WTC11 (cell line): ENCODE measurements at regions of chr9 and their contacts with region 1.

Region 1: GRCh38 chr9:69190086-69190862 is 16.2 kb downstream of the TJP2 start:
- DNase-seq: no peak
- ATAC-seq: no peak
- H3K4me3 Mint-ChIP-seq: no peak overlapping the region
- H3K27ac Mint-ChIP-seq: 0 out of 2 replicates have a peak overlapping the region, but pooled peaks have one; percentile 34
- H3K4me1 Mint-ChIP-seq: peaks cover 58% of the 10 kb centered on the region
- H3K27me3 Mint-ChIP-seq: no peaks in the 10 kb centered on the region
- CTCF ChIP-seq: no peak

Region 2: DNA sequence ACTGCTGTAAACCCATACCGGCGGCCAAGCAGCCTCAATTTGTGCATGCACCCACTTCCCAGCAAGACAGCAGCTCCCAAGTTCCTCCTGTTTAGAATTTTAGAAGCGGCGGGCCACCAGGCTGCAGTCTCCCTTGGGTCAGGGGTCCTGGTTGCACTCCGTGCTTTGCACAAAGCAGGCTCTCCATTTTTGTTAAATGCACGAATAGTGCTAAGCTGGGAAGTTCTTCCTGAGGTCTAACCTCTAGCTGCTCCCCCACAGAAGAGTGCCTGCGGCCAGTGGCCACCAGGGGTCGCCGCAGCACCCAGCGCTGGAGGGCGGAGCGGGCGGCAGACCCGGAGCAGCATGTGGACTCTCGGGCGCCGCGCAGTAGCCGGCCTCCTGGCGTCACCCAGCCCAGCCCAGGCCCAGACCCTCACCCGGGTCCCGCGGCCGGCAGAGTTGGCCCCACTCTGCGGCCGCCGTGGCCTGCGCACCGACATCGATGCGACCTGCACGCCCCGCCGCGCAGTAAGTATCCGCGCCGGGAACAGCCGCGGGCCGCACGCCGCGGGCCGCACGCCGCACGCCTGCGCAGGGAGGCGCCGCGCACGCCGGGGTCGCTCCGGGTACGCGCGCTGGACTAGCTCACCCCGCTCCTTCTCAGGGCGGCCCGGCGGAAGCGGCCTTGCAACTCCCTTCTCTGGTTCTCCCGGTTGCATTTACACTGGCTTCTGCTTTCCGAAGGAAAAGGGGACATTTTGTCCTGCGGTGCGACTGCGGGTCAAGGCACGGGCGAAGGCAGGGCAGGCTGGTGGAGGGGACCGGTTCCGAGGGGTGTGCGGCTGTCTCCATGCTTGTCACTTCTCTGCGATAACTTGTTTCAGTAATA is 154.6 kb before region 1 on chr9 and contains the start of gene FXN:
- CTCF ChIA-PET with region 1: interaction called, 14 read pairs
- POLR2A ChIA-PET with region 1: no interaction called
- DNase-seq: peak; percentile 80
- ATAC-seq: peak; percentile 91
- H3K4me3 Mint-ChIP-seq: peak within 1 kb of the TSS; percentile 94
- H3K27ac Mint-ChIP-seq: peak within 1 kb of the TSS; percentile 83
- H3K4me1 Mint-ChIP-seq: peaks cover 11% of the 10 kb centered on the region
- H3K27me3 Mint-ChIP-seq: no peaks in the 10 kb centered on the region
- CTCF ChIP-seq: peak; percentile 95
- total RNA-seq, gene FXN: 28.7 to 30.6 TPM (median 29.4 TPM) in 3 replicates

Region 3: DNA sequence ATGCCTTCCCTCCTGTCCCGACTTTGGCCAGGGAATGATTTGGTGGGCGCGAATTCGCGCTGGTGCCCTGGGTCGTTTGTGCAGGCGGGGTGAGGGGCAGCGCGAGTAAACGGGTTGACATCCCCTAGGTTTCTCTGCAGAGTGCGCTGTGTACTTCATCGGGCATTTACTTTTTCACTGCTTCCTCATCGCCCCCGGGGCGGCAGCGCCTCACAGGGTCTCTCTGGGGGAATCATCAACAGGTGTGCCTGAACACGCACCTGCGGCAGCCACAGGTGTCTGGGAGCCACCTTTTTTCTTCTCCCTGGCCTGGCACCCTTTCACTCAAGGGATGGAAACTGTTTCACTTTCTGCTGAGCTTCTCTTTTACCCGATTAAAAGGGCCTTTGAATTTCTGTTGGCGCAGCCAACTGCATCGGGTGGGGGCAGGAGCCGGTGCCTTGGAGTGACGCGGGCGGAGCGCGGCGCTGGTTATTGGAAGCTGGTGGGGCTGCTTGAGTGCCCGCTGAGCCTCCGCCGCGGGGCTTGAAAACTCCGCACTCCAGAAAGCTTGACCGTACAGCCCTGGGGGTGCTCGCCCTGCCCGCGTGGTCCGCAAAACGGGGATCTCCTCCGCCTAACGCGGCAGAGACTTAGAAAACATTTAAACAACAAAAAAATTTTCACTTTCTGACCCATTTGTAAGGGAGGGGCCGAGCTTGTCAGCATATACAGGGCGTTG is 68.3 kb before region 1 on chr9:
- CTCF ChIA-PET with region 1: interaction called, 12 read pairs
- POLR2A ChIA-PET with region 1: interaction called, 3 read pairs
- DNase-seq: peak; percentile 67
- ATAC-seq: peak; percentile 12
- H3K4me3 Mint-ChIP-seq: peak overlapping the region; percentile 93
- H3K27ac Mint-ChIP-seq: peak overlapping the region; percentile 99
- H3K4me1 Mint-ChIP-seq: peaks cover 27% of the 10 kb centered on the region
- H3K27me3 Mint-ChIP-seq: no peaks in the 10 kb centered on the region
- CTCF ChIP-seq: no peak

Region 4: DNA sequence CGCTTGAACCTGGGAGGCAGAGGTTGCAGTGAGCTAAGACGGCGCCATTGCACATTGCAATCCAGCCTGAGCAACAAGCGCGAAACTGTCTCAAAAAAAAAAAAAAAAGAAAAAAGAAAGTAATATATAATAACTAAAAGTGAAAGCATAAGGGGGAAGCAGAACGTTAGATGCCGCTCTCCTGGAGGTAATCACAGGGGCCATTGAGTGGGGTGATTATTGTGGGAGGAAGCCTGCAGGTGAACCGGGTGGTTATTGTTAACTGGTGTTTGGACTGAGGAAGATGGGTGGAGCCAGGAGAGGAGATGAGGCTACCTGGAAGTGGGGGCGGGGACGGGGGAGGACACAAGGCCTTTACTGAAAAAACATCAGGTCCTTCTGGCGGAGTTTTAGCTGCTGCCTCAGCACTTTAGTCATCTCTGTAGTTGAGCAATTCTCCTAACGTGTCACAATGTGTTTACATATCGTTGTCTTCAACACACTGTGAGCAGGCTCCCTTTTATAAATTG is 21.5 kb before region 1 on chr9:
- CTCF ChIA-PET with region 1: interaction called, 18 read pairs
- POLR2A ChIA-PET with region 1: no interaction called
- DNase-seq: peak; percentile 53
- ATAC-seq: peak; percentile 77
- H3K4me3 Mint-ChIP-seq: no peak overlapping the region
- H3K27ac Mint-ChIP-seq: no peak overlapping the region; the same call in 1 of the 2 replicates
- H3K4me1 Mint-ChIP-seq: peaks cover 63% of the 10 kb centered on the region
- H3K27me3 Mint-ChIP-seq: no peaks in the 10 kb centered on the region
- CTCF ChIP-seq: no peak

Region 5: GRCh38 chr9:69207503-69207902 is 17.2 kb after region 1 on chr9:
- CTCF ChIA-PET with region 1: interaction called, 12 read pairs
- POLR2A ChIA-PET with region 1: interaction called, 3 read pairs
- DNase-seq: no peak
- ATAC-seq: peak; percentile 73
- H3K4me3 Mint-ChIP-seq: no peak overlapping the region
- H3K27ac Mint-ChIP-seq: peak overlapping the region; percentile 26; the same call in 1 of the 2 replicates
- H3K4me1 Mint-ChIP-seq: peaks cover 59% of the 10 kb centered on the region
- H3K27me3 Mint-ChIP-seq: no peaks in the 10 kb centered on the region
- CTCF ChIP-seq: no peak